GM12878 (cell line): ENCODE measurements at regions of chr2 and their contacts with region 1.

Region 1: DNA sequence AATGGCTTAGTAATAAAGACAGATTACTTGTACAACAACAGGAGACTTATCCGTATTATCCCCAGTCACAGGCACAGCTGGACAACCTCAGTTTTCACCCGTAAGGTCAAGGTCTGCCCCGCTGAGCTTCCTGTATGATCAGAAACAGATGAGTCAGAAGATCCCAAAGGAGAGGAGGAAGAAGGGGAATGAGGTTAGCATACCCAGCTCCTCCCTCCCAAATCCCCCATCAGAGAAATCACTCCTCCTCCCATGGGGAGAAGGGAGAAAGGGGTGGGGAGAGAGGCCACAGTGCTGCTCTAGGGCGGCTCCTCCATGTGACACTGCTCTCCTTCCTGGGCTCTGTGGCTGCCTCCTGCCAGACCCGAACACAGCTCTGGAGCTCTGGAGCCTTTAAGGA is 53.8 kb upstream of the SPTBN1 start:
- DNase-seq: no peak
- ATAC-seq: no peak
- H3K4me3 ChIP-seq: no peak overlapping the region
- H3K27ac ChIP-seq: no peak overlapping the region
- H3K4me1 ChIP-seq: no peaks in the 10 kb centered on the region
- H3K27me3 ChIP-seq: no peaks in the 10 kb centered on the region; a peak in 1 of 4 replicates
- CTCF ChIP-seq: no peak
- EP300 ChIP-seq: no peak
- POLR2A ChIP-seq: no peak
- RAD21 ChIP-seq: no peak

Region 2: GRCh38 chr2:53880756-53881155 is 521.6 kb before region 1 on chr2:
- CTCF ChIA-PET with region 1: no interaction called
- POLR2A ChIA-PET with region 1: no interaction called
- RAD21 ChIA-PET with region 1: no interaction called
- SMC1A ChIA-PET with region 1: no interaction called
- in situ Hi-C with region 1: no loop called
- intact Hi-C with region 1: loop called (anchors 5 kb)
- DNase-seq: no peak
- ATAC-seq: no peak
- H3K4me3 ChIP-seq: no peak overlapping the region
- H3K27ac ChIP-seq: no peak overlapping the region
- H3K4me1 ChIP-seq: no peaks in the 10 kb centered on the region
- H3K27me3 ChIP-seq: no peaks in the 10 kb centered on the region
- CTCF ChIP-seq: no peak
- EP300 ChIP-seq: no peak
- POLR2A ChIP-seq: no peak
- RAD21 ChIP-seq: no peak